Natural killer cell (primary cell): ENCODE measurements at regions of chr1 and their contacts with region 1.

Region 1: GRCh38 chr1:54764133-54764921 is at the start of gene PARS2:
- DNase-seq: peak; percentile 92 to 99
- ATAC-seq: peak; percentile 89 to 97 (median 93)
- H3K4me3 ChIP-seq: peak within 1 kb of the TSS; percentile 68
- H3K4me3 Mint-ChIP-seq: peak within 1 kb of the TSS; percentile 94
- H3K27ac ChIP-seq: peak within 1 kb of the TSS; percentile 76
- H3K27ac Mint-ChIP-seq: peak within 1 kb of the TSS; percentile 96 to 97
- H3K4me1 ChIP-seq: peaks cover 16% of the 10 kb centered on the region
- H3K4me1 Mint-ChIP-seq: peaks cover 48 to 53% of the 10 kb centered on the region in 2 donors
- H3K27me3 ChIP-seq: no peaks in the 10 kb centered on the region
- H3K27me3 Mint-ChIP-seq: no peaks in the 10 kb centered on the region
- CTCF ChIP-seq: no peak
- total RNA-seq, gene PARS2: 0.95 to 1.4 (median 0.96) TPM

Region 2: DNA sequence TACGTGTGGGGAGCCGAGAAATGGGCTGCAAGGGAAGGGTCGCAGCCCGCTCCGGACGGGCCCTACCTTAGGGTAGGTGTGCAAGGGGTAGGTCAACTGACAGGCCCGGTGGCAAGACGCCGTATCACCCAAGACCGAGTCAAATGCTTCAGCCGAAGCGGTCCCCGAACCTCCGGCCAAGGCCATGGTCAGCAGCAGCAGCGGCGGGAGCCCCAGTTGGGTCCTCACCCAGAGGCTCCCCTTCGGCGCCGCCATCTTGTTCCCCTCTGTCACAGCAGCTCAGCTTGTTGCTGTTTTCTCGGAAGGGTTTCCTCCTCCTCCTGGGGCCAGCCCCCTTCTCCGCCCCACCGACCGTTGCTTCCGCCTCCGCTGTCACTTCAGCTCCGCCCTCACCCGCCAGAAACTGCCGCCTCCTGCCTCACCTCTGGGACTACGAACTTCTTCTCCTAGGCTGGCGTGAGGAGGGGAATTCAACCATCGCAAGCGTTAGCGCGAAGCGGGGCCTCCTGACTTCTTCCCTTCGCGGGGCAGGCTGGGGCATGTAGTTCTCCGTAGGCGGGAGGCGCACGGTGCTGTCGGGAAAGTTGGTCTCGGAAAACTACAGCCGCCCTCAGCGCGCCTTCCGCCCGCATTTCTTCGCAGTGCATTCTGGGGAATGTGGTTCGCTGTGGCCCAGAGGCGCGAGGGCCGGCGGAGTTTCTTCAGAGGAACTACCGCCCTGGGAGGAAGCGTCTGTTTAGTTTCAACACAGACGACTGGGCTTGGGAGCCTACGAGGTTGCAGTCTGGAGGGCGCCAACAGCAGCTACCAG is 711.2 kb before region 1 on chr1 and contains the starts of genes TCEANC2 and TMEM59:
- intact Hi-C with region 1: loop called (anchors 1 kb)
- DNase-seq: peak; percentile 93 to 99
- ATAC-seq: peak; percentile 88 to 96 (median 90)
- H3K4me3 ChIP-seq: peak within 1 kb of the TSS; percentile 88
- H3K4me3 Mint-ChIP-seq: no peak within 1 kb of the TSS
- H3K27ac ChIP-seq: peak within 1 kb of the TSS; percentile 84
- H3K27ac Mint-ChIP-seq: no peak within 1 kb of the TSS
- H3K4me1 ChIP-seq: peaks cover 33% of the 10 kb centered on the region
- H3K4me1 Mint-ChIP-seq: peaks cover 23 to 24% of the 10 kb centered on the region in 2 donors
- H3K27me3 ChIP-seq: no peaks in the 10 kb centered on the region
- H3K27me3 Mint-ChIP-seq: no peaks in the 10 kb centered on the region
- CTCF ChIP-seq: no peak
- total RNA-seq, gene TCEANC2: 5.1 to 9.5 (median 7.3) TPM
- total RNA-seq, gene TMEM59: 187 to 202 (median 199) TPM

Region 3: GRCh38 chr1:54715493-54716298 is 48.6 kb before region 1 on chr1 and contains the start of gene TTC4:
- intact Hi-C with region 1: loop called (anchors 1 kb)
- DNase-seq: peak; percentile 84 to 92
- ATAC-seq: peak; percentile 97 to 98 (median 98)
- H3K4me3 ChIP-seq: peak within 1 kb of the TSS; percentile 91
- H3K4me3 Mint-ChIP-seq: peak within 1 kb of the TSS; percentile 86
- H3K27ac ChIP-seq: peak within 1 kb of the TSS; percentile 56
- H3K27ac Mint-ChIP-seq: peak within 1 kb of the TSS; percentile 76 to 79
- H3K4me1 ChIP-seq: peaks cover 12% of the 10 kb centered on the region
- H3K4me1 Mint-ChIP-seq: peaks cover 25 to 29% of the 10 kb centered on the region in 2 donors
- H3K27me3 ChIP-seq: no peaks in the 10 kb centered on the region
- H3K27me3 Mint-ChIP-seq: peaks cover 3 to 5% of the 10 kb centered on the region in 2 donors
- CTCF ChIP-seq: no peak
- total RNA-seq, gene TTC4: 7.8 to 13.6 (median 10.0) TPM

Region 4: DNA sequence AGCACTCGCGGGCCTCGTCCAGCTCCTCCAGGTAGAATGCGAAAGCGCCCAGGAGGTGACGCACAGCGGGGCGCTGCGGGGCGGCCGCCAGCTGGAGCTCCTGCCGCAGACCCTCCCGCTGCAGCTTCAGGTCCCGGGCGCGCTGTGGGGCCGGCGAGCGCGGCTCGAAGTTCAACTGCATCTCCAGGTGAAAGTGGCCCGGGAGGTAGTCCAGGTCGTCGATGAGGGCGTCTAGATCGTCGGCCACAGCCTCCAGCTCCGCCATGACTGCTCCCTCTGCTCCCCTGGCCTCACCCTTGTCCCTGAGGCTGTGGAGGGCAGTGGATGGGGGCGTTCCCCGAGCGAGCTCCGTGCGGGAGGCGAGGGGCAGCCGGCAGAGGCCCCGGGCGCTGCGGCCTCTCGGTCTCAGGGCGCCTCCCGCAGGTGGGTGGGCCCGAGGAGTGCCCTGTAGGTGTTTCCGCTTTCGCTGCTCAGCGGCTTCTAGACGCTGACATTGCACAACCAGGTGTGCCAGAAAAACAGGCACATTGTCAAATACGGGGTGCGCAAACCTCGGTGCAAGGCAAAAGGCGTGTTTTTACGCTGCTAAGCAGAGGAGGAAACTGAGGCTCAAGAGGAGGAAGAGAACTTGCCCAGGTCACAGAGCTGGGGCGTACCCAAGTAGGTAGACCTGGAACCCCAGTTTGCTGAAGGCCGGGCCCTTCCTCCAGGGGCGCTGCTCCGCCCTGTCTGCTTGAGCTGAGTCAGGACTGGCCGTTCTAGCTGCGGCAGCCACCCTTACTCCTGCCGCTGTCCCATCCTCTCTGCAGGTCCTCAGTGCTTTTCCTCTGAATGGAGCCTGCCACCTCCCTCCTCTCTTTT is 36.8 kb after region 1 on chr1 and contains the start of gene TTC22:
- intact Hi-C with region 1: loop called (anchors 1 kb)
- DNase-seq: peak; percentile 65 to 80
- ATAC-seq: peak; percentile 77 to 89 (median 84)
- H3K4me3 ChIP-seq: peak within 1 kb of the TSS; percentile 80
- H3K4me3 Mint-ChIP-seq: peak within 1 kb of the TSS; percentile 92
- H3K27ac ChIP-seq: peak within 1 kb of the TSS; percentile 70
- H3K27ac Mint-ChIP-seq: peak within 1 kb of the TSS; percentile 91 to 95
- H3K4me1 ChIP-seq: peaks cover 66% of the 10 kb centered on the region
- H3K4me1 Mint-ChIP-seq: peaks cover 79 to 85% of the 10 kb centered on the region in 2 donors
- H3K27me3 ChIP-seq: no peaks in the 10 kb centered on the region
- H3K27me3 Mint-ChIP-seq: no peaks in the 10 kb centered on the region
- CTCF ChIP-seq: peak; percentile 72
- total RNA-seq, gene TTC22: 17.8 to 30.8 (median 26.5) TPM